ENCODE measurements at regions of chr20 and their contacts with region 1.

Region 1: GRCh38 chr20:37615340-37616109 is 78.3 kb upstream of the CTNNBL1 start:
- DNase-seq: peak; percentile 44
- H3K4me3 ChIP-seq: no peak overlapping the region
- H3K27ac ChIP-seq: no peak overlapping the region
- H3K4me1 ChIP-seq: no peaks in the 10 kb centered on the region
- H3K27me3 ChIP-seq: peaks cover 12% of the 10 kb centered on the region
- CTCF ChIP-seq: peak; percentile 52 to 80 (median 62)
- EP300 ChIP-seq: no peak
- POLR2A ChIP-seq: no peak

Region 2: DNA sequence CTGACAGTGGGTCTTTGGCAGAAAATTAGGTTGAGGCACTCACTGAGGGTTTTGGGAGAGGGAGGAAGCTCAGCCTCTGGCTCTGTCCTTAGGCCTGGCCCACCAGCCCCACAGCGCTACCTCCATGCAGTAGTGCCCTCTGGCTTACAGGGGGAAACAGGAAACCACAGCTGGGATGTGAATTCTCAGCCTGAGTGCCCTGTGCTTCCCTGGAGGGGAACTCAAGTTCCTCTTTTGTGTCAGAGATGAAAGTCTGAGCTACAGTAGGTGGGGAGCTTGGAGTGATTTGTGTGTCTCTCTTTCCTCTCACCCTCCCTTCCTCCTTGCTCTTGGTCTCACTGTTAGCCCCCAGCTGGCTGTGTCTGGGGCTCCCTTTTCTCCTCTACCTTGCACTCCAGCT is 39.6 kb before region 1 on chr20:
- in situ Hi-C with region 1: no loop called
- intact Hi-C with region 1: loop called (anchors 1 kb)
- DNase-seq: no peak
- H3K4me3 ChIP-seq: no peak overlapping the region
- H3K27ac ChIP-seq: no peak overlapping the region
- H3K4me1 ChIP-seq: no peaks in the 10 kb centered on the region
- H3K27me3 ChIP-seq: peaks cover 14% of the 10 kb centered on the region
- CTCF ChIP-seq: no peak
- EP300 ChIP-seq: no peak
- POLR2A ChIP-seq: no peak

Measured in transverse colon (tissue), 4 donors.